Naive thymus-derived CD4-positive, alpha-beta T cell (primary cell): ENCODE measurements at regions of chrX and their contacts with region 1.

Region 1: GRCh38 chrX:120372667-120373370 is 10.9 kb downstream of the ATP1B4 start:
- DNase-seq: no peak
- ATAC-seq: no peak
- H3K4me3 ChIP-seq: no peak overlapping the region
- H3K4me3 Mint-ChIP-seq: no peak overlapping the region
- H3K27ac ChIP-seq: no peak overlapping the region
- H3K27ac Mint-ChIP-seq: no peak overlapping the region
- H3K4me1 ChIP-seq: no peaks in the 10 kb centered on the region
- H3K4me1 Mint-ChIP-seq: no peaks in the 10 kb centered on the region
- H3K27me3 ChIP-seq: no peaks in the 10 kb centered on the region
- H3K27me3 Mint-ChIP-seq: peaks cover 0 to 1% (median 0%) of the 10 kb centered on the region in 5 donors

Region 2: GRCh38 chrX:120350450-120351138 is 22.2 kb before region 1 on chrX:
- CTCF ChIA-PET with region 1: no interaction called
- POLR2A ChIA-PET with region 1: no interaction called
- intact Hi-C with region 1: loop called in 1 of 2 experiments (anchors 2 kb)
- DNase-seq: no peak
- ATAC-seq: no peak
- H3K4me3 ChIP-seq: no peak overlapping the region
- H3K4me3 Mint-ChIP-seq: no peak overlapping the region
- H3K27ac ChIP-seq: no peak overlapping the region
- H3K27ac Mint-ChIP-seq: no peak overlapping the region
- H3K4me1 ChIP-seq: no peaks in the 10 kb centered on the region
- H3K4me1 Mint-ChIP-seq: no peaks in the 10 kb centered on the region
- H3K27me3 ChIP-seq: no peaks in the 10 kb centered on the region
- H3K27me3 Mint-ChIP-seq: no peaks in the 10 kb centered on the region